Endothelial cell of umbilical vein (primary cell): ENCODE measurements at regions of chr5 and their contacts with region 1.

Region 1: GRCh38 chr5:41695920-41696582 is 174.2 kb downstream of the OXCT1 start:
- DNase-seq: no peak
- H3K4me3 ChIP-seq: no peak overlapping the region
- H3K27ac ChIP-seq: no peak overlapping the region
- H3K4me1 ChIP-seq: no peaks in the 10 kb centered on the region
- H3K27me3 ChIP-seq: peaks cover 6 to 11% of the 10 kb centered on the region in 2 experiments
- CTCF ChIP-seq: peak; percentile 17 to 34
- POLR2A ChIP-seq: no peak

Region 2: GRCh38 chr5:41575110-41575779 is 120.8 kb before region 1 on chr5:
- CTCF ChIA-PET with region 1: no interaction called
- POLR2A ChIA-PET with region 1: no interaction called
- dilution Hi-C with region 1: no loop called
- intact Hi-C with region 1: no loop called
- DNase-seq: no peak
- H3K4me3 ChIP-seq: no peak overlapping the region
- H3K27ac ChIP-seq: no peak overlapping the region
- H3K4me1 ChIP-seq: no peaks in the 10 kb centered on the region
- H3K27me3 ChIP-seq: no peaks in the 10 kb centered on the region
- CTCF ChIP-seq: no peak
- POLR2A ChIP-seq: no peak

Region 3: DNA sequence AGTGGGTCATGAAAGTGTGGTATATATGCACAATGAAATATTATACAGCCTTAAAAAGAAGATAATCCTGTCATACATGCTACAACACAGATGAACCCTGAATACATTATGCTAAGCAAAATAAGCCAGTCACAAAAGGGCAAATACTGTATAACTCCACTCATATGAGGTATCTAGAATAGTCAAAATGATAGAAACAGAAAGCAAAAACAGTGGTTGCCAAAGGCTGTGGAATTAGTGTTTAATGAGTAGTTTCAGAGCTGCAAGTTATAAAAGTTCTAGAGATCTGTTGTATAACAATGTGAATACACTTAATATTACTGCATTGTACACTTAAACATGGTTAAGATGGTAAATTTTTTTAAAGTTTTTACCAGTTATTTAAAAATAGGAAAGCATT is 39.2 kb after region 1 on chr5:
- CTCF ChIA-PET with region 1: no interaction called
- POLR2A ChIA-PET with region 1: no interaction called
- dilution Hi-C with region 1: no loop called
- intact Hi-C with region 1: loop called (anchors 1 kb)
- DNase-seq: no peak
- H3K4me3 ChIP-seq: no peak overlapping the region
- H3K27ac ChIP-seq: no peak overlapping the region
- H3K4me1 ChIP-seq: no peaks in the 10 kb centered on the region
- H3K27me3 ChIP-seq: no peaks in the 10 kb centered on the region
- CTCF ChIP-seq: no peak
- POLR2A ChIP-seq: no peak

Region 4: GRCh38 chr5:41985945-41986344 is 289.9 kb after region 1 on chr5:
- CTCF ChIA-PET with region 1: no interaction called
- POLR2A ChIA-PET with region 1: no interaction called
- dilution Hi-C with region 1: no loop called
- intact Hi-C with region 1: no loop called
- DNase-seq: no peak
- H3K4me3 ChIP-seq: no peak overlapping the region
- H3K27ac ChIP-seq: no peak overlapping the region
- H3K4me1 ChIP-seq: no peaks in the 10 kb centered on the region
- H3K27me3 ChIP-seq: no peaks in the 10 kb centered on the region
- CTCF ChIP-seq: no peak
- POLR2A ChIP-seq: no peak